Activated CD4-positive, alpha-beta T cell treated with anti-CD3 and anti-CD28 coated beads for 36 hours (primary cell): ENCODE measurements at regions of chrX and their contacts with region 1.

Region 1: GRCh38 chrX:49761481-49761880 is 65.7 kb upstream of the PAGE1 start:
- DNase-seq: peak; percentile 4
- ATAC-seq: no peak
- H3K4me3 Mint-ChIP-seq: no peak overlapping the region
- H3K27ac Mint-ChIP-seq: no peak overlapping the region
- H3K4me1 Mint-ChIP-seq: no peaks in the 10 kb centered on the region
- H3K27me3 Mint-ChIP-seq: no peaks in the 10 kb centered on the region

Region 2: GRCh38 chrX:49840679-49841078 is 79.2 kb after region 1 on chrX:
- CTCF ChIA-PET with region 1: interaction called, 7 read pairs
- POLR2A ChIA-PET with region 1: no interaction called
- intact Hi-C with region 1: loop called in 1 of 2 experiments (anchors 1 kb)
- DNase-seq: peak; percentile 77
- ATAC-seq: peak; percentile 81
- H3K4me3 Mint-ChIP-seq: no peak overlapping the region
- H3K27ac Mint-ChIP-seq: no peak overlapping the region
- H3K4me1 Mint-ChIP-seq: peaks cover 5% of the 10 kb centered on the region
- H3K27me3 Mint-ChIP-seq: no peaks in the 10 kb centered on the region

Region 3: DNA sequence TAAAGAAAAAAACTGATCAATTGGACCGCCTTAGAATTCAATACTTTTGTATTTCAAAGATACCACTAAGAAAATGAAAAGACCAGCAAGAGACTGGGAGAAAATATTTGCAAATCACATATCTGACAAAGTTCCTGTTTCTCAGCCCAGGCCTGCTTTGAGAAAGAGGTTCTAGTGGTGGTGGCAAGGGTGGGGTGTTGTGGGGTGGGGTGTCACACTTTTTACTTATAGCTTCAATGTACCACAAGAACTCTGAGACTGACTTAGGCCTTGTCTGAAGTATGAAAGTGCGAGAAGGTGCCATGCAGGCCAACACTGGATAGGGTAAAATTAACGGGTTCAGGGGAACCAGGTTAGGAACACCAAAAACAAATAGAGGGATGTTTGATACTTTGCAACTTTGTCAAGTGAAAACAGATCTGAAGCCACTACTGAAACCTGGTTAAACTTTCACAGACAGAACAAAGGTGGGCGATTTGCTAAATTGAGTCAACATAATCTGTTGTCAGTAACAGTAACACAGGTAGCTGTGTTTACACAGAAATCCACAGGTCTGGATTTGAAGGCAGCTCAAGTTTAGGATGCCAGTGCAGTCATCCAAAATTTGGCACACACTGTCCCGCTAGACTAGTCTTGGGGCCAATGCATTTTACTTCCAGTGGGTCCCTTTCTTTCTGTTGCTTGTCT is 620.4 kb after region 1 on chrX:
- CTCF ChIA-PET with region 1: no interaction called
- POLR2A ChIA-PET with region 1: no interaction called
- intact Hi-C with region 1: no loop called
- DNase-seq: no peak
- ATAC-seq: no peak
- H3K4me3 Mint-ChIP-seq: no peak overlapping the region
- H3K27ac Mint-ChIP-seq: no peak overlapping the region
- H3K4me1 Mint-ChIP-seq: no peaks in the 10 kb centered on the region
- H3K27me3 Mint-ChIP-seq: peaks cover 1% of the 10 kb centered on the region